Heart left ventricle (tissue), 16 donors: ENCODE measurements at regions of chr5 and their contacts with region 1.

Region 1: GRCh38 chr5:156076912-156077311 is 250.1 kb upstream of the SGCD start:
- DNase-seq: no peak
- ATAC-seq: no peak
- H3K4me3 ChIP-seq: no peak overlapping the region
- H3K27ac ChIP-seq: no peak overlapping the region
- H3K4me1 ChIP-seq: no peaks in the 10 kb centered on the region
- H3K27me3 ChIP-seq: no peaks in the 10 kb centered on the region
- CTCF ChIP-seq: no peak
- POLR2A ChIP-seq: no peak

Region 2: DNA sequence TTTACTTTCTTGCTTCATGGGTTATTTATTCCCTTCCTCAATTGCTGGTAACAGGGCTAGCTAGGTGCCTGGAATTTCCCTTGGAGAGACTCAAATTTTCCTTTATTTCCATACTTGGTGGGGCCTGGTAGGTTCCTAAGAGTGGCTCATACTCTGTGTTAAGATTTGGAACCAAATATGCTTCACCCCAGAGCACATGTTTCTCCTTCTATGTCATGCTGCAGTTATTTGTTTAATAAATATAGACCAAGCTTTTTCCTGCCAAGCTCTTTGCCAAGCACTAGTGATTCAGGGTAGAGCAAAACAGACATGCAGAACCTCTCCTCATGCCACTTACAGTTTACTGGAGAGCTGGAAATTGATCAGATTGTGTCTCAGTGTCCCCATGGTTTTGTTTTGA is 40.3 kb before region 1 on chr5:
- intact Hi-C with region 1: loop called in 1 of 10 experiments (anchors 5 kb)
- DNase-seq: peak in 3 of 5 donors; percentile 13 to 35 (median 23)
- ATAC-seq: peak; percentile 86 to 96 (median 89)
- H3K4me3 ChIP-seq: no peak overlapping the region
- H3K27ac ChIP-seq: peak overlapping the region; percentile 29 to 84 (median 72)
- H3K4me1 ChIP-seq: peaks cover 0 to 29% (median 5%) of the 10 kb centered on the region in 12 donors
- H3K27me3 ChIP-seq: no peaks in the 10 kb centered on the region
- CTCF ChIP-seq: no peak
- POLR2A ChIP-seq: no peak

Region 3: GRCh38 chr5:156094001-156094400 is 17.1 kb after region 1 on chr5:
- intact Hi-C with region 1: loop called in 1 of 10 experiments (anchors 1 kb)
- DNase-seq: peak; percentile 17 to 51 (median 28)
- ATAC-seq: peak; percentile 81 to 89 (median 85)
- H3K4me3 ChIP-seq: no peak overlapping the region
- H3K27ac ChIP-seq: no peak overlapping the region
- H3K4me1 ChIP-seq: peaks cover 0 to 15% (median 0%) of the 10 kb centered on the region in 12 donors
- H3K27me3 ChIP-seq: no peaks in the 10 kb centered on the region
- CTCF ChIP-seq: no peak
- POLR2A ChIP-seq: no peak